Activated CD8-positive, alpha-beta memory T cell treated with anti-CD3 and anti-CD28 coated beads, Interleukin-2, amount 10 ng/mL, durations not matched to agents 7 days and 5 days (primary cell): ENCODE measurements at regions of chr21 and their contacts with region 1.

Region 1: DNA sequence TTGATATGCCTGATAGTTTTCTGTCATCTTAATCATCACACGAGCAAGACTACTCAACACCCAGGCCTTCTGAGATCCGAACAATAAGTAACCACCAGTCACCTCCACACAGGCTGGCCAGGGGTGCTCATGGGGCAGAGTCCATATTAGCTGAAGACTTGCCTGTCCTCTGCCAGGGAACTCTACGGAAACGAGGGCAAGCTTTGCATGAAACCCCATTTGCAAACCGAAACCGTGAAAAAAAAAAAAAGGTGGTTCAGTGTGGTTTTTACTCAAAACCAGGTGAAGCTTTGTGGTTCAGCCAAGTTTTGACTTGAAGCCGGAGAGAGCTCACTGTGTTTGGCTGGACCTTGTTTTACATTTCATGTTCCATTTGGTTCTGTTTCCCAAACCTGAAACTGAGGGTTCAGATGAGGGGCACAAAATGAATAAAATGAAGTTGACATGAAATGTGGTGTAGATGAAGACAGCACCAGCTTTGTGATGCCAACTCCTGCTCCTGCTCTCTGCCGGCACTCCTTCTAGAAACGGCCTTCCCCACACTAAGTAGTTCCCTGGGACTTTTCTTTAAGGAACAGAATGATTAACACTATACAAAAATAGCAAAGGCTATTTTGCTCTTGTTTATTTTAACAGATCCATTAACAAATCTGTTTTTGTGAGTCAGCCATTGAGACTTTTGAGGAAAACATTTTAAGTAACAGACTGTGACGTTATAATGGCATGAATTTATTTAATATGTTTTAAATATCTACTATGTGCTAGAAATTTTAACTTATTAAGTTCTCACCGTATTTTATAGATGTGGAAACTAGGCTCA is 74.7 kb downstream of the RUNX1 start:
- DNase-seq: peak; percentile 74
- ATAC-seq: peak; percentile 91
- H3K4me3 Mint-ChIP-seq: peak overlapping the region; percentile 57
- H3K27ac Mint-ChIP-seq: peak overlapping the region; percentile 82
- H3K4me1 Mint-ChIP-seq: peaks cover 71% of the 10 kb centered on the region
- H3K27me3 Mint-ChIP-seq: peaks cover 20% of the 10 kb centered on the region

Region 2: GRCh38 chr21:34933609-34934335 is 40.6 kb before region 1 on chr21:
- CTCF ChIA-PET with region 1: interaction called, 11 read pairs
- DNase-seq: peak; percentile 50
- ATAC-seq: peak; percentile 95
- H3K4me3 Mint-ChIP-seq: peak overlapping the region; percentile 62
- H3K27ac Mint-ChIP-seq: peak overlapping the region; percentile 96
- H3K4me1 Mint-ChIP-seq: peaks cover 70% of the 10 kb centered on the region
- H3K27me3 Mint-ChIP-seq: no peaks in the 10 kb centered on the region

Region 3: GRCh38 chr21:35138665-35139381 is 164.5 kb after region 1 on chr21:
- CTCF ChIA-PET with region 1: no interaction called
- DNase-seq: peak; percentile 71
- ATAC-seq: peak; percentile 83
- H3K4me3 Mint-ChIP-seq: no peak overlapping the region
- H3K27ac Mint-ChIP-seq: peak overlapping the region; percentile 41
- H3K4me1 Mint-ChIP-seq: peaks cover 13% of the 10 kb centered on the region
- H3K27me3 Mint-ChIP-seq: no peaks in the 10 kb centered on the region